Posterior vena cava (tissue), 2 donors: ENCODE measurements at regions of chr2 and their contacts with region 1.

Region 1: DNA sequence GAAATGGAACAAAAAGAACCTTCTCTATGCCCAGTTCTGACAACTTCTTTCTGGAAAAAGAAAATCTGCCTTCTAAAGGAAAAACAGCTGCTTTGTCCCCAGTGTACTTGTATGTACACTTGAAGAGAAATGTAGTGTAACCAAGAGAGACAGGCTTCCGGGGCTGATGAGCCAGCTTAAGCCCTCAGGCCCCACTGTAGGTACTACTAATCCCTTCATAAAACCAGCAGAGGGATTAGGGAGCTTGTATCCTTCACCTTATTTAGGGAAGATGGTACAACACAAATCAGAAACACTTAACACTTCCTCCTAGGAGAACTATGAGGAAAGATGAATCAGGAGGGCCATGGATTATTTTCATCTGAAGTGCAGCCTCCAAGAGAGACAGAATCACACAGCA is 18.8 kb upstream of the SUCLG1 start:
- DNase-seq: no peak

Region 2: DNA sequence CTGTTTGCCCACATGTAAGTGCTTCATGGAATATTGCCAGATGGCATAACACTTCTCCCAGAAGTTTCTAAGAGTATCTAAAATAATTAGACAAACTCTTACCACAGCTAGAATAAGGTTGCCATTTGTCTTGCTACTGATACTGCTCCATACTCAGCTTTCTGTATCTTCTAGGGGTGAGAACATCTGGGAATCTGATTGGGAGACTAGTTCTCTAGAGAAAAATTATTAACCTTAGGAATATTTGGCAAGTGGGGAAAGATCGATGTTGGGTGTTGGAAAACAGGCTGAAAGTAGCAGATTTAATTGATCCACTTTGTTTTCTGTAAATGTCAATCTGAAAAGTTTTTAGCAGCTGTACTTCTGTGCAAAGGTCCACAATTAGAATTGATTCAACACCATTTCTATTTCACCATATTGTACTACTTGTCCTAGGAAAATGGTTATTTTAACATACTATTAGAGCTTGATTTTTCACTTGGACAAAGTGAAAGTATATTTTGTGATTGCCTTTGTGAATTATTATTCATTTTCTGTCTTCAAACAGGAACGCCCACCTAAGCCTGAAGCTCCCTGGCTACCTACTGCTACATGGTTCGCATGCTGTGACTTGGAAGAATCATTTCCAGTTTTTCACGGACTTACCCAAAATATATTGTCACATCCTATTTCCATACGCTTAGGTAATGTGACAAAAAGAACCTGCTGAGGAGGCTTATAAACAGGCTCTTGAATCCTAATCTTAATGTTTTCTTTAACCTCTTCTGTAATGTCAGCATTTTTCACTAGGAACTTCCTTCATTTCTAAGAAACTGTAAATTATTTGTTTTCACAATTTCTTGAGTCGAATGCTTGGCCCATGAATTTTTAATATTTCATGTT is 255.3 kb after region 1 on chr2:
- intact Hi-C with region 1: no loop called
- DNase-seq: no peak

Region 3: GRCh38 chr2:85409845-85410583 is 932.1 kb after region 1 on chr2 and contains the start of gene CAPG:
- intact Hi-C with region 1: loop called in 1 of 2 experiments (anchors 5 kb)
- DNase-seq: no peak
- total RNA-seq, gene CAPG: 56.6 to 72.1 TPM